GM10248 (cell line): ENCODE measurements at regions of chr3 and their contacts with region 1.

Region 1: GRCh38 chr3:52056968-52057805 is 816 bp upstream of the DUSP7 start:
- DNase-seq: peak; percentile 98
- CTCF ChIP-seq: no peak

Region 2: GRCh38 chr3:51879937-51880336 is 177.2 kb before region 1 on chr3:
- CTCF ChIA-PET with region 1: no interaction called
- POLR2A ChIA-PET with region 1: no interaction called
- DNase-seq: no peak
- CTCF ChIP-seq: no peak

Region 3: DNA sequence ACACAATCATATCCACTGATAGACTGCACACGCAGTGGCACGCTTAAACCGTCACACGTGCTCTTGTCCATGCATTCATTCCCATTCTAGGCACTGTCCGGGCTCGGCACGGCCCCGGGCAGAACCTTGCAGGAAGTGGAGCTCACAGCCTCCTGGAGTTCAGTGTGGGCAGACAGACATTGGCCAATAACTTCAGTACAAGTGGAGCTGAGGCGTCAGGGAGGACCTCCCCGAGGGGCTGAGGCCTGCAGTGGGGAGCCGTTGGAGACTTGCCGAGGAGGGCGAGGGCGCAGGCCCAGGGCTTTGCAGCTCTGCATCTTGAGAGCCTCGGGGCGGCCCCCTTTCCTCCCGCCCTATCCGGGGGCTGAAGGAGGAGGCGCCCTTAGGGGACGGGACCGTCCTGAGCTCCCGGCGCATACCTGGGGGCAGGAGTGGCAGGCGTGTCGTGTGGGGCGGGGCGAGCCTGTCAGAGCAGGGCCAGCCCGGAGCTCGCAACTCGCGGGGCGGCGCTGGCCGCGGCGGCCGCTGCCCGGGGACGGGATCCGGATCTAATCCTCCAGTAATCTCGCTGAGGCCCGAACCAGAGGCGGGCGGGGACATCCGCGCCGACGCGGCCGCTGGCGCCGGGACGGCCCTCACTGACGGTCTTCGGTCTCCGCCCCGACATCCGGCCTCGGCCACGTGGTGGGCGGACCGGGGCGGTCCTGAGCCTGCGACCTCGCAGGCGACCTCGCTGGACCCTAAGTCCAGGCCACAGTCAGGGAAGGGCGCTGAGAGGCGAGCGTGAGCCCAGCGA is 74.2 kb before region 1 on chr3 and contains the start of gene ACY1:
- CTCF ChIA-PET with region 1: interaction called, 10 read pairs
- POLR2A ChIA-PET with region 1: no interaction called
- DNase-seq: peak; percentile 95
- CTCF ChIP-seq: no peak

Region 4: DNA sequence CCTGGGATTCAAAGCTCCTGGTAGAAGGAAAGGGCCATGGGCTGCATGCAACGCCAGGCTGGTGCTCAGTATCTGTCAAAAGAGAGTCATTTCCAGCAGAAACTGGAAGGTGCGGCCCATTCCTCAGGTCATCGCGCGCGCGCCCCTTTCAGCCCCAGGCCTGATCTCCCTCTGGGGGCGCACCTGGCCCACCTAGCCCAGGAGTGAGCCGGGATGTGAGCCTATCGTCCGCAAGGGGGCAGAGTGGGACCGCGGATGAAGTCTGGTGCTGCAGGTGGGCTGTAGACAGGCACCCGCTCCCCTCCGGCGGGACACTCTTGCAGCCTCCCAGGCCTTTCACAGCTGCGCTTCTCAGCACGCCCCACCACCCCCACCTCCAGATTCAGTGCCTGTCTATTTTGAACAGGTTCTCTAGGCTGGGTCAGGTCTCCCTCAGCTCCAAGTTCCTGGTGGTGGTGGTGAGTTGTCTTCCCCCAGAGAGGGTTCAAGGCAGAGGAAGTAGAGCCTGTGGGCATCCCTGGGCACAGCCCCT is 55.7 kb before region 1 on chr3:
- CTCF ChIA-PET with region 1: interaction called, 76 read pairs
- POLR2A ChIA-PET with region 1: no interaction called
- DNase-seq: peak; percentile 94
- CTCF ChIP-seq: peak; percentile 99

Region 5: GRCh38 chr3:52022323-52023100 is 34.7 kb before region 1 on chr3:
- CTCF ChIA-PET with region 1: interaction called, 10 read pairs
- POLR2A ChIA-PET with region 1: no interaction called
- DNase-seq: no peak
- CTCF ChIP-seq: no peak

Region 6: DNA sequence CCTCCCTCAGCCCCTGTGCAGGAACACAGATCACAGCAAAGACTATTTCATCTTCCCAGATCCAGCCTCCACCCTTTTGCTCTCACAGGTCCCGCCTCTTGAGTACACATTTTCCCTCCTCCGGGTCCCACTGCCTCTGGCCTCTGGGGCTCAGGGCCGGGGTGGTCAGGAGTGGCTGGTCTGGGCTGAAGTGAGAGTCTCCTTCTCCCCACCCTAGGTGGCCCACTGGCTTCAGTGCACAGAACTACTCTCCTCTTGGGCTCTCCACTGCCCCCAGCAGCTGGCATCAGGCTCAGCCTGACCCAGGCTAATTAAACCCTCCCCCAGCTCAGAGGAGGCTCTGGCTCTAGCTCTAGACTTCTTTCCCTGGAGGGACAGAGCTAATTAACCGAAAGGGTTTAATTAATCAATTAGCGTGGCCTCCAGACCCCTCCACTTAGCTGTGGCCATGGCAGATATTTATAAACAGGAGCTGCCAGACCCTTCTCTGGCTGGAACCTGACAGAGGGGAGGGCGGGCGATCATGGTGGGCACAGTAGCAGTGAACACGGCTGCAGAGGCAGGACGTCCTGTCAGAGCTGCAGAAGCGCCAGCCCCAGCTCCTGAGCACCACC is 16.0 kb before region 1 on chr3:
- CTCF ChIA-PET with region 1: interaction called, 22 read pairs
- POLR2A ChIA-PET with region 1: interaction called, 5 read pairs
- DNase-seq: no peak
- CTCF ChIP-seq: no peak

Region 7: DNA sequence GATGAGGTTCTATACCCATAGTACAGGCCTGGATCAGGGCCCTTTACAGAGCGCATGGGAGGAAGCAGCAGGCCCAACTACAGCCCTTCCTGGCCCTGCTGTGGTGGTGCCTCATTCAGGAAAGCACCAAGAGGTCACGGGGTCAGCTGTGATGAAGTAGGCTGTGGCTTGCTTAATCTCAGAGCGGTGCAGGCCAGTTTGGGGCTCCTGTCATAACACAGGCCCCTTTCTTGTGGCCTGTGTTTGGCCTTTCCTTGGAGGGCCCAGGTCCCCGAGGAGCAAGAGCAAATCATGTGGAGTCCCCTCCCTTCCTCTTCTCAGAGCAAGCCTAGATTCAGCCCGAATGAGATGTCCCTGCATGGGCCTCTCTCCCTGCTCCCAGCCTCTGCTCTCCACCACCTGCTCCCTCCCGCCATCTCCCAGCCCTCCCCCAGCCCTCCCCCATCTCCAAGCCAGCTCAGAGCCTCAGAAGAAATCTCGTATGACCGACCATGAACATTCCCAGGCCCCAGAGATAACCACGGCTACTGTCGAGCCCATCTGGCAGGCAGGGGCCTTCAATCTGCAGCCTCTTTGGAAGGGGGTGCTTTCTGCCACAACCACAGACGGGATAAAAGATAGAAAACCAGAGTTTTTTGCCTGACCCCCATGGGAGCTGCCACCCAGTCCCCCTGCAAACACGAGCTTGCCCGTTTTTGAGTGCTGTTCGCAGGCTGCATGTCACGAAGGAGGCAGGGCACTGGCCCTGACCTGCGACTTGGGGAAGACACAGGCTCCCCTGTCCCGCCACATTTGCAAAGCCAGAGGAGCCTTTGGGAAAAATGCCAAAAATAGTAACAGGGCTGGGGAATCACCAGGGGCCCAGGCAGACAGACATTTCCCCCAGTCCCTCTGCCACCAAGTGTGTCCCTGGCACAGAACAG is 31.5 kb after region 1 on chr3:
- CTCF ChIA-PET with region 1: interaction called, 16 read pairs
- POLR2A ChIA-PET with region 1: no interaction called
- DNase-seq: no peak
- CTCF ChIP-seq: no peak

Region 8: DNA sequence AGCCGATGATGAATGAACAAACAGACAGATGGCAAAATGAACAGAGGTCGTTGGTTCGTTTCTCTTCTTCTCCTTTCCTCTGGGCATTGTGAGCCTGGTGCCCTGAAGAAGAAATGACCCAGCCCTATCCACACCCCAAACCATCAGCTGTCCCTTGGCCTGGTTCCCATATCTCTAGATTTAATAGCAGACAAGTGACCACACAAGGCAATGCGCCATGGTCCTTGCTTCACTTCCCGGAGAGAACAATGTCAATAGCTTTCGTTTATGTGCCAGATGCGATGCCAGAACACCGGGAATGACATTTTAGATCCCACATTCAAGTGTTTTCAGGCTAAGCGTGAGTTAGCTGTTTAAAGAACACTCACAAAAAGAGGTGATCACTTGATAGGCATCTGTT is 79.3 kb after region 1 on chr3:
- CTCF ChIA-PET with region 1: interaction called, 11 read pairs
- POLR2A ChIA-PET with region 1: interaction called, 3 read pairs
- DNase-seq: no peak
- CTCF ChIP-seq: no peak

Region 9: DNA sequence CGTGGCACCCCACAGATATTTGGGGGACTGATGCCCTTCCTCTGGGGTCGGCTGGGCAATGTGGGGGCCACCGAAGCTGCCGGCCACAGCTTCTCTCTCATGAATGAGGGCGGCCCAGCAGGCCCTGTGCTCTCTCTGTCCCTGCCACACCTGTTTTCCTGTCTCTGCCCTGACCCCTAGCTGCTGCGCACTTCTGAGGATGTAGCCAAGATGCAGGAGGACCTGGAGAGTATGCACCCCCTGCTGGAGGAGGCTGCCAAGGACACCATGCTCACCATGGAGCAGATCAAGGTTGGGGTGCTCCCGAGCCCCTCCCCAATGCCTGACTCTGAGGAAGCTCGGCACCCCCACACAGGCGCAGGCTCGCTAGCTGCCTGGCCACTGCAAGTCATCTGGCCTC is 328.0 kb after region 1 on chr3:
- CTCF ChIA-PET with region 1: no interaction called
- POLR2A ChIA-PET with region 1: no interaction called
- DNase-seq: peak; percentile 75
- CTCF ChIP-seq: peak; percentile 50

Region 10: DNA sequence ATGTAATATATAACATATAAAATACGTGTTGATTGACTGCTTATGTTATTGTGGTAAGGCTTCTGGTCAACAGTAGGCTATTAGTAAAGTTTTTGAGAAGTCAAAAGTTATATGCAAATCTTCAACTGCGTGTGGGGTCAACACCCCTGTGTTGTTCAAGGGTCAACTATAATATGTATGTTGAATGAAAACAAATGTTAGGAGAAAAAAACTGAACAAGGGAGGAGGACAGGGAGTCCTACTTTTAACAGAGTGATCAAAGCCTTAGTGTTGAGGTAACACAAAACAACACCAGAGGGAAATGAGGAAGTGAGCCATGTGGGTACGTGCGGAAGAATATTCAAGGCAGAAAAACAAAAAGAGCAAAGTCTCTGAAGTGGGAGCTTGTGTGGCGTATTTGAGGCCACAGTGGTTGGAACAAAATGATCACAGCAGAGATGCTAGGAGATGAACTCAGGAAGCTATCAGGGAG is 926.2 kb after region 1 on chr3:
- CTCF ChIA-PET with region 1: no interaction called
- POLR2A ChIA-PET with region 1: no interaction called
- DNase-seq: peak; percentile 71
- CTCF ChIP-seq: no peak